Colonic mucosa (tissue), 4 donors: ENCODE measurements at regions of chr7 and their contacts with region 1.

Region 1: GRCh38 chr7:30983042-30983913 is 19.5 kb downstream of the GHRHR start:
- DNase-seq: peak; percentile 79
- H3K4me3 ChIP-seq: no peak overlapping the region
- H3K27ac ChIP-seq: no peak overlapping the region
- H3K4me1 ChIP-seq: no peaks in the 10 kb centered on the region
- H3K27me3 ChIP-seq: no peaks in the 10 kb centered on the region
- CTCF ChIP-seq: peak; percentile 90

Region 2: DNA sequence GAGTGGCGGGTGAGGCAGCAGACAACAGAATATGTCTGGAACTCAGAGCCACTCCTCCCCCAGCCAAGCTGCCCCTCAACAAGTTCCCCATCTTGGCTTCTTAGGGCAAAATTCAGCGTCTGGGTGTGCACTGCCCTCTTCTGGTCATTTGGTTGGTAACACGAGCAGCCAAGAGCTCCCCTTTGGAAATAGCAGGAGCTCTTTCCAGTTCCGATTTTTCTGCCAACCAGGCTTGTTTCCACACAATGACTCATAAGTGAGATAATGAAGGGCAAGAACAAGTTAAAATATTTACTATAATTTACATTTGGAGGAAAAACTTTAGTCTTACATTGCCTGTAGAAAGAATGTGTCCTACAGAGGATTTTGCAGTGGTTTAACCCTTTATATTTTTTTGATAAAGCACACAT is 139.4 kb after region 1 on chr7:
- intact Hi-C with region 1: loop called (anchors 1 kb)
- DNase-seq: peak; percentile 54
- H3K4me3 ChIP-seq: no peak overlapping the region
- H3K27ac ChIP-seq: no peak overlapping the region
- H3K4me1 ChIP-seq: no peaks in the 10 kb centered on the region
- H3K27me3 ChIP-seq: no peaks in the 10 kb centered on the region
- CTCF ChIP-seq: peak; percentile 69